Heart right ventricle (tissue), 16 donors: ENCODE measurements at regions of chr11 and their contacts with region 1.

Region 1: DNA sequence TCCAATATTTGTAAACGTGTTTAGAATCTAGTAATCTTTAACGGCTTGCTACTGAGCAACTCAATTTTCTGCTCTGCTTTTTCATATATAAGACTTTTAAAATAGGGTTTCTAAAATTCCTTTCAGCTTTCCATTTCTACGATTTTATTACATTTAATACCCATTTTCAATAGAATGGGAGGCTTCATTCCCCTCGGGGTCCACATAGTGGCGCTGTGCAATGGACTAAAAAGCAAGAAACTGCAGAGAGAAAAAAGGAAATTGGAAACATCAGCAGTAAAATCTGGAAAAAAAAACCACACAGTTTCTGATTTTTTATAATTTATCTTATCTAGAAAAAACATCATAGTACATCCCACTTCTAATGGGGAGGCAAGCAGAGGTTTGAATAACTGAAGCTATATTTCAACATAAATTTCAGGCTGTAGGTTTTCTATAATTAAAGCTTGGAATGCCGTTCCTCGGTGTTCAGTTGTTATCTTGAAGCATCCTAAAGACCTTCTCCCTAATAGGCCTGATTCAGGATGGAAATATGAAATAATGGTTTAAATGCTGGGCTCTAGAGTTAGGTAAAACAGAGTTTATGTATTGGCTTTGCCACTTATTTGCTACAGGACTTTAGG is 18.7 kb upstream of the JHY start:
- DNase-seq: peak; percentile 24 to 35
- ATAC-seq: no peak
- H3K4me3 ChIP-seq: peak overlapping the region in 2 of 10 donors; percentile 14 to 42
- H3K27ac ChIP-seq: peak overlapping the region in 1 of 10 donors; percentile 64
- H3K4me1 ChIP-seq: peaks cover 0 to 9% (median 0%) of the 10 kb centered on the region in 9 donors
- H3K27me3 ChIP-seq: peaks cover 0 to 53% (median 28%) of the 10 kb centered on the region in 7 donors
- CTCF ChIP-seq: peak; percentile 41 to 87 (median 76)

Region 2: GRCh38 chr11:122628810-122629555 is 234.8 kb before region 1 on chr11:
- intact Hi-C with region 1: loop called in 4 of 10 experiments (anchors 5 to 10 kb)
- DNase-seq: peak; percentile 48 to 57
- ATAC-seq: peak in 7 of 8 donors; percentile 58 to 79 (median 67)
- H3K4me3 ChIP-seq: no peak overlapping the region
- H3K27ac ChIP-seq: no peak overlapping the region
- H3K4me1 ChIP-seq: peaks cover 0 to 7% (median 0%) of the 10 kb centered on the region in 9 donors
- H3K27me3 ChIP-seq: peaks cover 0 to 40% (median 20%) of the 10 kb centered on the region in 7 donors
- CTCF ChIP-seq: peak; percentile 44 to 79 (median 74)

Region 3: GRCh38 chr11:123020968-123021367 is 157.2 kb after region 1 on chr11:
- intact Hi-C with region 1: loop called in 9 of 10 experiments (anchors 2 to 5 kb)
- DNase-seq: no peak
- ATAC-seq: peak in 2 of 8 donors; percentile 35 to 42
- H3K4me3 ChIP-seq: no peak overlapping the region
- H3K27ac ChIP-seq: no peak overlapping the region
- H3K4me1 ChIP-seq: peaks cover 0 to 8% (median 0%) of the 10 kb centered on the region in 9 donors
- H3K27me3 ChIP-seq: peaks cover 0 to 25% (median 15%) of the 10 kb centered on the region in 7 donors
- CTCF ChIP-seq: peak in 8 of 9 donors; percentile 8 to 65 (median 51)

Region 4: DNA sequence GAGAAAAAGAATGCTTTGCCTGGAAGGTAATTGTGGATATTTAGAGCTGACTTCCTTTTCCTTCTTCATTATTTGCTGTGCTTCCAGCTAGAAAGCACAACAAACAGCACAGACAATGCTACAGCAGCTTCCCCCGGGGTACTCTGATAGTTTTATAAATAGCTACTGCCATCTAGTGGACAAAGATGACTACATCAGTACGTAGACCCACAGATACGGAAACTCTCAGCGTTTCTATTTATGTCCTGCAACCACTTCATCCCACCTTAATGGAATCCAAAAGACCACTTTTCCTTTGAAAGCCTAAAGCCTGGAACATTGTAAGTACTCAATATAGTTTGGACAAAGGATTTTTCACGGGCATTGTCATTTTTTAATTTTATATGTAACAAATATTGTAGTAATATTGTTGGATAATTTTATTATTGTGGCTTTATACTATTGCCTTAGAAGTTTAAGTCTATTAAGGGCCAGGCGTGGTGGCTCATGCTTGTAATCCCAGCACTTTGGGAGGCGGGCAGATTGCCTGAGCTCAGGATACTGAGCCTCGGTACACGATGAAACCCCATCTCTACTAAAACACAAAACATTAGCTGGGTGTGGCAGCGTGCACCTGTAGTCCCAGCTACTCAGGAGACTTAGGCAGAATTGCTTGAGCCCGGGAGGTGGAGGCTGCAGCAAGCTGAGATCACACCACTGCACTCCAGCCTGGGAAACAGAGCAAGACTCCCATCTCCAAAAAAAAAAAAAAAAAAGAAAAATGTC is 190.7 kb after region 1 on chr11:
- intact Hi-C with region 1: loop called in 6 of 10 experiments (anchors 1 to 10 kb)
- DNase-seq: peak in 1 of 2 donors; percentile 40
- ATAC-seq: peak; percentile 71 to 93 (median 88)
- H3K4me3 ChIP-seq: no peak overlapping the region
- H3K27ac ChIP-seq: peak overlapping the region in 1 of 10 donors; percentile 3
- H3K4me1 ChIP-seq: peaks cover 23 to 59% (median 48%) of the 10 kb centered on the region in 9 donors
- H3K27me3 ChIP-seq: no peaks in the 10 kb centered on the region
- CTCF ChIP-seq: peak; percentile 58 to 82 (median 75)